ENCODE measurements at regions of chr22 and their contacts with region 1.

Region 1: GRCh38 chr22:36856121-36856791 is 4.5 kb upstream of the NCF4 start:
- DNase-seq: peak; percentile 66
- ATAC-seq: peak; percentile 92
- H3K4me3 ChIP-seq: no peak overlapping the region
- H3K27ac ChIP-seq: no peak overlapping the region
- H3K4me1 ChIP-seq: no peaks in the 10 kb centered on the region
- H3K27me3 ChIP-seq: peaks cover 1 to 25% of the 10 kb centered on the region in 2 experiments; a peak in 3 of 5 replicates
- CTCF ChIP-seq: peak; percentile 98
- EP300 ChIP-seq: no peak
- POLR2A ChIP-seq: no peak
- RAD21 ChIP-seq: peak; percentile 91

Region 2: DNA sequence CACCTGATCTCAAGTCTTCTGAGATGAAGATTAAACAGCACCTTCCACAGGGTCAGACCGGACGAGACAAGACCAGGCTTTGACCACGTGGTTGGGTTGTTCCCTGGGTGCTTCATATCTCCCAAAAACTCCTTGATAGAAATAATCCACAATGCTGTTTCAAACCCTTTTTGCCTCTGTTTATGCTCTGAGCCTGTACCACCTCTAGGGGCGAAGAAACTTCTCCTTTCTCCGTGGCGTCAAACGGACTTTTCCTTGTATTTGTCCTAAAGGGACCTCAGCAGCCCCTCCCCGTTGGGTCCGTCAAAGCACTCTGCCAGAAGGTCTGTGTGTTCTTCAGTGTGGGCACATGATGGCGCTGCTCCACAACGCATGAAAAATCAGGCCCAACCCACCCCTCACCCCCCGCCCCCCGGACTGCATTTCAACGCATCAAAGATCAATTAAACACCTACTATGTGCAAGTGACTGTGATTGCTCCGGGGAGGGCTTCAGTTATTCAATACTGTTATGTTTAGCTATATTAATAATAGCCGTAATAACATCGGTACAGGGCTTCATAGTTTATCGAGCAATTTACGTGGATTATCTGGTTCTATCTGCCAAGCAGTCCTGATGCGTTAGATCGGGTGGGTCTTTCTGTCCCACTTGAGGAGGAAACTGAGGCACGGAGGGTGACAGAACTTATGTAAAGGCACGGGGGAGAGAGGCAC is 310.0 kb before region 1 on chr22:
- CTCF ChIA-PET with region 1: interaction called, 67 read pairs
- POLR2A ChIA-PET with region 1: no interaction called
- in situ Hi-C with region 1: loop called (anchors 5 kb)
- intact Hi-C with region 1: loop called (anchors 1 kb)
- DNase-seq: peak; percentile 48
- ATAC-seq: peak; percentile 83
- H3K4me3 ChIP-seq: no peak overlapping the region
- H3K27ac ChIP-seq: no peak overlapping the region
- H3K4me1 ChIP-seq: 0 out of 2 replicates have a peak, but pooled peaks cover 9% of the 10 kb centered on the region
- H3K27me3 ChIP-seq: peaks cover 4 to 39% of the 10 kb centered on the region in 2 experiments; a peak in 4 of 5 replicates
- CTCF ChIP-seq: peak; percentile 71
- EP300 ChIP-seq: no peak
- POLR2A ChIP-seq: no peak
- RAD21 ChIP-seq: no peak

Region 3: GRCh38 chr22:36781656-36782627 is 74.3 kb before region 1 on chr22:
- CTCF ChIA-PET with region 1: interaction called, 23 read pairs
- POLR2A ChIA-PET with region 1: no interaction called
- in situ Hi-C with region 1: loop called (anchors 5 kb)
- intact Hi-C with region 1: loop called (anchors 1 kb)
- DNase-seq: peak; percentile 40
- ATAC-seq: peak; percentile 92
- H3K4me3 ChIP-seq: no peak overlapping the region
- H3K27ac ChIP-seq: no peak overlapping the region
- H3K4me1 ChIP-seq: peaks cover under 1% of the 10 kb centered on the region; the same call in 1 of the 2 replicates
- H3K27me3 ChIP-seq: peaks cover 0 to 85% of the 10 kb centered on the region in 2 experiments; a peak in 4 of 5 replicates
- CTCF ChIP-seq: peak; percentile 87
- EP300 ChIP-seq: no peak
- POLR2A ChIP-seq: no peak
- RAD21 ChIP-seq: peak; percentile 73

Region 4: GRCh38 chr22:36977947-36978660 is 121.8 kb after region 1 on chr22:
- CTCF ChIA-PET with region 1: interaction called, 11 read pairs
- POLR2A ChIA-PET with region 1: no interaction called
- in situ Hi-C with region 1: loop called (anchors 10 kb)
- intact Hi-C with region 1: loop called (anchors 2 kb)
- DNase-seq: peak; percentile 72
- ATAC-seq: peak; percentile 80
- H3K4me3 ChIP-seq: peak overlapping the region; percentile 38 to 65 (median 55); a peak in 5 of 6 replicates
- H3K27ac ChIP-seq: no peak overlapping the region
- H3K4me1 ChIP-seq: peaks cover 6% of the 10 kb centered on the region; the same call in 1 of the 2 replicates
- H3K27me3 ChIP-seq: peaks cover 0 to 7% of the 10 kb centered on the region in 2 experiments; a peak in 2 of 5 replicates
- CTCF ChIP-seq: peak; percentile 94
- EP300 ChIP-seq: no peak
- POLR2A ChIP-seq: no peak
- RAD21 ChIP-seq: peak; percentile 73